CD8-positive, alpha-beta T cell (primary cell): ENCODE measurements at regions of chr12 and their contacts with region 1.

Region 1: DNA sequence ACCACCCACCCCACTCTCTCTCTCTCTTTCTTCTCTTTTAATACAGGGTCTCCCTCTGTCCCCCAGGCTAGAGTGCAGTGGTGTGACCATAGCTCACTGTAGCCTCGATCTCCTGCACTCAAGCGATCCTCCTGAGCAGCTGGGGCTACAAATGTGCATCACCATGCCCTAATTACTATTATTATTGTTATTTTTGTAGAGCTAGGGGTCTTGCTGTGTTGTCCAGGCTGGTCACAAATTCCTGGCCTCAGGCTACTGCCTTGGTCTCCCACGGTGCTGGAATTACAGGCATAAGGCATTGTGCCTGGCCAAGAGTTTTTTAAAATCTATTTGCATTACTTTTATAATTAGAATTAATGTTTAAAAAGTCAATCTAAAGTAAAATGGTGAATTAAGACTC is 23.0 kb upstream of the TUBA1B start:
- DNase-seq: no peak
- ATAC-seq: no peak
- H3K4me3 ChIP-seq: no peak overlapping the region
- H3K4me3 Mint-ChIP-seq: no peak overlapping the region
- H3K27ac ChIP-seq: no peak overlapping the region
- H3K27ac Mint-ChIP-seq: no peak overlapping the region
- H3K4me1 ChIP-seq: no peaks in the 10 kb centered on the region
- H3K4me1 Mint-ChIP-seq: no peaks in the 10 kb centered on the region
- H3K27me3 ChIP-seq: no peaks in the 10 kb centered on the region
- H3K27me3 Mint-ChIP-seq: no peaks in the 10 kb centered on the region
- CTCF ChIP-seq: no peak

Region 2: DNA sequence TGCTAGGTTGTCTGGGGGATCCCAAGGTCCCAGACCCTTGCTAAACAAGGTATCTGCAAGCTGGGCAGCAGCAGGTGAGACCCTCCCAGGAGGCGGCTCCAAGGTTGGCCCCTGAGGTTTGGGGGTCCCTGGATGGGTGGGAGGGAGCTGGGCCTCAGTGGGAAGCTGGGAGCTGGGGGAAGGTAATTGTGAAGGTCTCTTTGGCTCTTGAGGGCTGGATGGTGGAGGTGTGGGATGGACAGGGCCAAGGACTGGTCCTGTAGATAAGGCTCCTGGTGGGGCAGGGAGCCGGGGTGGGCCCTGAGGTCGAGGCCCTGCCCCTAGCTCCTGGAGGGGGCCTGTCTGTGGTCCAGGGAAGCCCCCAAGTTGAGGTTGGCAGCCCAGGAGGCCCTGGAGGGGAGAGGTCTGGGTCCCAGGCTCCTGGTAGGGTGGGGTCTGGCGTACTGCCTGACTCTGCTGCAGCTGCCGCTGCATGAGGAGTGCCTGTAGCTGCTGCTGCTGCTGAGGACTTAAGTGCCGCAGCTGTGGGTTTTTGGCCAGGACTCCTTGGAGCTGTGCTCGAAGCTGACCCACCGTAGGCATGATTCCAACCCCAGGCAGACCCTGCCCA is 122.6 kb before region 1 on chr12:
- CTCF ChIA-PET with region 1: no interaction called
- POLR2A ChIA-PET with region 1: no interaction called
- intact Hi-C with region 1: no loop called
- DNase-seq: no peak
- ATAC-seq: no peak
- H3K4me3 ChIP-seq: no peak overlapping the region
- H3K4me3 Mint-ChIP-seq: no peak overlapping the region
- H3K27ac ChIP-seq: no peak overlapping the region
- H3K27ac Mint-ChIP-seq: no peak overlapping the region
- H3K4me1 ChIP-seq: no peaks in the 10 kb centered on the region
- H3K4me1 Mint-ChIP-seq: no peaks in the 10 kb centered on the region
- H3K27me3 ChIP-seq: no peaks in the 10 kb centered on the region
- H3K27me3 Mint-ChIP-seq: no peaks in the 10 kb centered on the region
- CTCF ChIP-seq: no peak

Region 3: DNA sequence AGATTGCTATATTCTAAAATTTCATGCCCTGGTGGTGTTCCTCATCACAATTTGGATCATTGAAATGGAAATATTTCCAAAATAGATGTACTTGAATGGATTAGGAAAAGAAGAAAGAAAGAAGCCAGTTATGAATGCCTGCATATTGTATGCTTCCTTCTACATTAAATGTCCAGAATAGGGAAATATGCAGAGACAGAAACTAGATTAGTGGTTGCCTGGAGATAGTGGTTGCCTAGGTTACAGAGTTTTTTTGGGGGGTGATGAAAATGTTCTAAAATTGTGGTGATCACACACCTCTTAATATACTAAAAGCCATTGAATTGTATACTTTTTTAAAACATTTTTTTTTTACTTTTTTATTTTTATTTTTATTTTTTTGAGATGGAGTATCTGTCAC is 16.7 kb after region 1 on chr12:
- CTCF ChIA-PET with region 1: no interaction called
- POLR2A ChIA-PET with region 1: no interaction called
- intact Hi-C with region 1: no loop called
- DNase-seq: no peak
- ATAC-seq: no peak
- H3K4me3 ChIP-seq: no peak overlapping the region
- H3K4me3 Mint-ChIP-seq: no peak overlapping the region
- H3K27ac ChIP-seq: no peak overlapping the region
- H3K27ac Mint-ChIP-seq: no peak overlapping the region
- H3K4me1 ChIP-seq: no peaks in the 10 kb centered on the region
- H3K4me1 Mint-ChIP-seq: no peaks in the 10 kb centered on the region
- H3K27me3 ChIP-seq: no peaks in the 10 kb centered on the region
- H3K27me3 Mint-ChIP-seq: no peaks in the 10 kb centered on the region
- CTCF ChIP-seq: no peak

Region 4: DNA sequence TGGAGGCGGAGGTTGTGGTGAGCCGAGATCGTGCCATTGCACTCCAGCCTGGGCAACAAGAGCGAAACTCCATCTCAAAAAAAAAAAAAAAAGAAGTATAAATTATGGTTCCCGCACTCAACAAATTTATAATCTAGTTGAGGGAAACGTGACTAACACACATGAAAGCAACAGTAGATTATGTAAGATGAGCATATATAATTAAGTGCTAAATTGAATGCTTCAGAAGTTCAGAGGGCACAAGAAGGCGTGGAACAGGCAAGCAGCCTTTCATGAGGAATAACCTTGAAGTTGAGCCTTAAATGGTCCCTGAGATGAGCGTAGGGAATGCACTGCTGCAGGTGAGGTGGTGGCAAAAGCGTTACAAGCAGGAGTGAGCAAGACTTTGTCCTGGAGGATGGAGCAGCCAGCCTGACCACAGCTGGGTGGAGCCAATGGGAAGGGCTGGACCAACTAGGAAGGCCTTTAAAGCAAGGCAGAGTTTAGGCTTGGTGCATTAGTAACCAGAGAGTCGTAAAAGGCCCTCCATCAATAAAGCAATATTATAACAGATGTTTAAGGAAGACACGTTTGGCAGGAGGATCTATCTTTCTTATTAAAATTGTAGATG is 65.3 kb after region 1 on chr12:
- CTCF ChIA-PET with region 1: no interaction called
- POLR2A ChIA-PET with region 1: no interaction called
- intact Hi-C with region 1: loop called in 1 of 2 experiments (anchors 5 kb)
- DNase-seq: no peak
- ATAC-seq: no peak
- H3K4me3 ChIP-seq: no peak overlapping the region
- H3K4me3 Mint-ChIP-seq: no peak overlapping the region
- H3K27ac ChIP-seq: no peak overlapping the region
- H3K27ac Mint-ChIP-seq: no peak overlapping the region
- H3K4me1 ChIP-seq: no peaks in the 10 kb centered on the region
- H3K4me1 Mint-ChIP-seq: no peaks in the 10 kb centered on the region
- H3K27me3 ChIP-seq: no peaks in the 10 kb centered on the region
- H3K27me3 Mint-ChIP-seq: no peaks in the 10 kb centered on the region
- CTCF ChIP-seq: no peak